ENCODE measurements at regions of chr5 and their contacts with region 1.

Region 1: GRCh38 chr5:159456722-159457465 is 126.6 kb upstream of the IL12B start:
- DNase-seq: no peak
- ATAC-seq: no peak
- H3K4me3 ChIP-seq: no peak overlapping the region
- H3K27ac ChIP-seq: no peak overlapping the region
- H3K4me1 ChIP-seq: peaks cover 0 to 2% of the 10 kb centered on the region in 2 donors
- H3K27me3 ChIP-seq: no peaks in the 10 kb centered on the region

Region 2: GRCh38 chr5:159497221-159497620 is 40.3 kb after region 1 on chr5:
- intact Hi-C with region 1: loop called in 1 of 2 experiments (anchors 5 kb)
- DNase-seq: no peak
- ATAC-seq: no peak
- H3K4me3 ChIP-seq: no peak overlapping the region
- H3K27ac ChIP-seq: no peak overlapping the region
- H3K4me1 ChIP-seq: no peaks in the 10 kb centered on the region
- H3K27me3 ChIP-seq: no peaks in the 10 kb centered on the region

Region 3: GRCh38 chr5:159752622-159753275 is 295.9 kb after region 1 on chr5:
- intact Hi-C with region 1: loop called in 1 of 2 experiments (anchors 10 kb)
- DNase-seq: peak in 1 of 2 donors; percentile 66
- ATAC-seq: peak; percentile 82
- H3K4me3 ChIP-seq: no peak overlapping the region
- H3K27ac ChIP-seq: peak overlapping the region; percentile 93 to 98
- H3K4me1 ChIP-seq: peaks cover 0 to 7% of the 10 kb centered on the region in 2 donors
- H3K27me3 ChIP-seq: no peaks in the 10 kb centered on the region

Measured in aorta (tissue), 5 donors.